ENCODE measurements at regions of chr10 and their contacts with region 1.

Region 1: GRCh38 chr10:102583435-102584417 is 60.6 kb upstream of the TRIM8 start:
- DNase-seq: peak; percentile 78 to 90
- ATAC-seq: peak; percentile 97

Region 2: GRCh38 chr10:102394079-102394800 is 189.5 kb before region 1 on chr10:
- intact Hi-C with region 1: loop called in 1 of 2 experiments (anchors 5 kb)
- DNase-seq: peak; percentile 95 to 96
- ATAC-seq: peak; percentile 83

Region 3: GRCh38 chr10:102503281-102504220 is 80.2 kb before region 1 on chr10 and contains the start of gene SUFU:
- intact Hi-C with region 1: loop called (anchors 5 to 10 kb)
- DNase-seq: peak; percentile 97 to 99
- ATAC-seq: peak; percentile 74
- total RNA-seq, gene SUFU: 8.0 to 9.3 TPM

Region 4: GRCh38 chr10:102509387-102509786 is 74.3 kb before region 1 on chr10:
- intact Hi-C with region 1: loop called (anchors 5 to 10 kb)
- DNase-seq: no peak
- ATAC-seq: no peak

Region 5: GRCh38 chr10:102691285-102692066 is 107.8 kb after region 1 on chr10:
- intact Hi-C with region 1: no loop called
- DNase-seq: no peak
- ATAC-seq: no peak

Measured in left colon (tissue), 2 donors.